PC-3 (cell line): ENCODE measurements at regions of chr9 and their contacts with region 1.

Region 1: GRCh38 chr9:128972956-128973355 is 25.5 kb downstream of the NUP188 start:
- DNase-seq: peak; percentile 80
- ATAC-seq: peak; percentile 100
- H3K4me3 ChIP-seq: no peak overlapping the region
- H3K27ac ChIP-seq: peak overlapping the region; percentile 32
- H3K4me1 ChIP-seq: peaks cover 16% of the 10 kb centered on the region
- H3K27me3 ChIP-seq: no peaks in the 10 kb centered on the region
- CTCF ChIP-seq: no peak

Region 2: DNA sequence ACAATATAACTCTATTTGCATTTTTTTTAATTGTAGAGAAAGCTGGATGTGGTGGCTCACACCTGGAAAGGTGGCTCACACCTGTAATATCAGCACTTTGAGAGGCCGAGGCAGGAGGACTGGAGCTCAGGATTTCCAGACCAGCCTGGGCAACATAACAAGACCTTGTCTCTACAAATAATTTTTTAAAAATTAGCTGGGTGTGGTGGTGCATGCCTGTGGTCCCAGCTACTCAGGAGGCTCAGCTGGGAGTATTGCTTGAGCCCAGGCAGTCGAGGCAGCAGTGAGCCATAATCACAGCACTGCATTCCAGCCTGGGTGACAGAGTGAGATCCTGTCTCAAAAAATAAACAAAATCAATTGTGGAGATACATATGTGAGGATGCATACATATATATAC is 101.6 kb before region 1 on chr9:
- CTCF ChIA-PET with region 1: interaction called, 12 read pairs
- POLR2A ChIA-PET with region 1: no interaction called
- intact Hi-C with region 1: no loop called
- DNase-seq: no peak
- ATAC-seq: no peak
- H3K4me3 ChIP-seq: no peak overlapping the region
- H3K27ac ChIP-seq: no peak overlapping the region
- H3K4me1 ChIP-seq: peaks cover 8% of the 10 kb centered on the region; the same call in 1 of the 2 replicates
- H3K27me3 ChIP-seq: no peaks in the 10 kb centered on the region
- CTCF ChIP-seq: no peak